ENCODE measurements at regions of chr12 and their contacts with region 1.

Region 1: DNA sequence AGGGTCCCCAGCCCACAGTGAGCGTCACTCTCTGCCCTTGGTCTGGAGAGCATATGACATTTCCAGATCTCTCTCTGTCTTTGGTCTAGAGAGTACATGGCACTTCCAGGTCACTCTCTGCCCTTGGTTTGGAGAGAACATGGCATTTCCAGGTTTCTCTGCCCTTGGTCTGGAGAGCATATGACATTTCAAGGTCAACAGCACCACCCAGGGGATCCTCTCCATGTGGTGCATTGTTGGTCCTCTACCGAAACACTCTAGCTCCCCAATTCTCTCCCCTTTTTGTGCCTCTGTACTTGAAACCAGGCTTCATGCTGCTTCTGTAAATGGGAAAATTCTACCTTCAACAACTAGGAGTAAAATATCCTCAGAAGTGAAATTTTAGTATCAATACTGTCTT is 399.4 kb downstream of the NELL2 start:
- DNase-seq: no peak
- ATAC-seq: no peak
- H3K4me3 Mint-ChIP-seq: no peak overlapping the region
- H3K27ac Mint-ChIP-seq: no peak overlapping the region
- H3K4me1 Mint-ChIP-seq: no peaks in the 10 kb centered on the region
- H3K27me3 Mint-ChIP-seq: no peaks in the 10 kb centered on the region
- CTCF ChIP-seq: no peak

Region 2: GRCh38 chr12:44405297-44405696 is 71.4 kb before region 1 on chr12:
- CTCF ChIA-PET with region 1: no interaction called
- POLR2A ChIA-PET with region 1: no interaction called
- DNase-seq: no peak
- ATAC-seq: peak; percentile 84
- H3K4me3 Mint-ChIP-seq: peak overlapping the region; percentile 26
- H3K27ac Mint-ChIP-seq: peak overlapping the region; percentile 81
- H3K4me1 Mint-ChIP-seq: peaks cover 31% of the 10 kb centered on the region
- H3K27me3 Mint-ChIP-seq: no peaks in the 10 kb centered on the region
- CTCF ChIP-seq: no peak

Region 3: DNA sequence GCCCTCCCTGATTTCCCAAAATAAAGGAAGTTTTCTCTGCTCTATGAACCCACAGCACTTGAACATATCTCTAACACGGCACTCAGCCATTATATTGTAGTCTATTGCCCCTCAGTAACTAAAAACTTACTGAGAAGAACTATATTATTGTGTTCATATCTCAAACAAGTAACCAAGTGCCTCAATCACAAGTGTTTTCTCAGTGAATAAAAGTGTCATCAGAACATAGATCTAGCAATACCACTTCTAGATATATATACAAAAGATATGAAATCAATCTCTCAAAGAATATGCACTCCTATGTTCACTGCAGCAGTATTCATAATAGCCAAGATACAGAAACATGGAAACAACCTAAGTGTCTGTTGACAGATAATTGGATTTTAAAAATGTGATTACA is 261.4 kb after region 1 on chr12:
- CTCF ChIA-PET with region 1: no interaction called
- POLR2A ChIA-PET with region 1: interaction called, 14 read pairs
- DNase-seq: no peak
- ATAC-seq: no peak
- H3K4me3 Mint-ChIP-seq: no peak overlapping the region
- H3K27ac Mint-ChIP-seq: no peak overlapping the region
- H3K4me1 Mint-ChIP-seq: no peaks in the 10 kb centered on the region
- H3K27me3 Mint-ChIP-seq: no peaks in the 10 kb centered on the region
- CTCF ChIP-seq: no peak